CD8-positive, alpha-beta T cell (primary cell): ENCODE measurements at regions of chr1 and their contacts with region 1.

Region 1: GRCh38 chr1:29181413-29182225 is at the start of gene SRSF4:
- DNase-seq: peak; percentile 98 to 99 (median 99)
- ATAC-seq: peak; percentile 92
- H3K4me3 ChIP-seq: peak within 1 kb of the TSS; percentile 89 to 98
- H3K4me3 Mint-ChIP-seq: peak within 1 kb of the TSS; percentile 94
- H3K27ac ChIP-seq: peak within 1 kb of the TSS; percentile 94 to 100
- H3K27ac Mint-ChIP-seq: peak within 1 kb of the TSS; percentile 94
- H3K4me1 ChIP-seq: peaks cover 37% of the 10 kb centered on the region
- H3K4me1 Mint-ChIP-seq: peaks cover 48% of the 10 kb centered on the region
- H3K27me3 ChIP-seq: no peaks in the 10 kb centered on the region
- H3K27me3 Mint-ChIP-seq: no peaks in the 10 kb centered on the region
- CTCF ChIP-seq: peak; percentile 68
- total RNA-seq, gene SRSF4: 83.6 to 92.2 TPM

Region 2: GRCh38 chr1:28552758-28553663 is 628.6 kb before region 1 on chr1 and contains the start of gene TRNAU1AP:
- CTCF ChIA-PET with region 1: no interaction called
- POLR2A ChIA-PET with region 1: no interaction called
- intact Hi-C with region 1: loop called in 1 of 2 experiments (anchors 2 kb)
- DNase-seq: peak; percentile 95 to 98 (median 97)
- ATAC-seq: peak; percentile 96
- H3K4me3 ChIP-seq: peak within 1 kb of the TSS; percentile 91 to 98
- H3K4me3 Mint-ChIP-seq: peak within 1 kb of the TSS; percentile 99
- H3K27ac ChIP-seq: peak within 1 kb of the TSS; percentile 77 to 86
- H3K27ac Mint-ChIP-seq: peak within 1 kb of the TSS; percentile 99
- H3K4me1 ChIP-seq: peaks cover 15% of the 10 kb centered on the region
- H3K4me1 Mint-ChIP-seq: peaks cover 24% of the 10 kb centered on the region
- H3K27me3 ChIP-seq: no peaks in the 10 kb centered on the region
- H3K27me3 Mint-ChIP-seq: no peaks in the 10 kb centered on the region
- CTCF ChIP-seq: no peak
- total RNA-seq, gene TRNAU1AP: 20.5 to 25.7 TPM

Region 3: DNA sequence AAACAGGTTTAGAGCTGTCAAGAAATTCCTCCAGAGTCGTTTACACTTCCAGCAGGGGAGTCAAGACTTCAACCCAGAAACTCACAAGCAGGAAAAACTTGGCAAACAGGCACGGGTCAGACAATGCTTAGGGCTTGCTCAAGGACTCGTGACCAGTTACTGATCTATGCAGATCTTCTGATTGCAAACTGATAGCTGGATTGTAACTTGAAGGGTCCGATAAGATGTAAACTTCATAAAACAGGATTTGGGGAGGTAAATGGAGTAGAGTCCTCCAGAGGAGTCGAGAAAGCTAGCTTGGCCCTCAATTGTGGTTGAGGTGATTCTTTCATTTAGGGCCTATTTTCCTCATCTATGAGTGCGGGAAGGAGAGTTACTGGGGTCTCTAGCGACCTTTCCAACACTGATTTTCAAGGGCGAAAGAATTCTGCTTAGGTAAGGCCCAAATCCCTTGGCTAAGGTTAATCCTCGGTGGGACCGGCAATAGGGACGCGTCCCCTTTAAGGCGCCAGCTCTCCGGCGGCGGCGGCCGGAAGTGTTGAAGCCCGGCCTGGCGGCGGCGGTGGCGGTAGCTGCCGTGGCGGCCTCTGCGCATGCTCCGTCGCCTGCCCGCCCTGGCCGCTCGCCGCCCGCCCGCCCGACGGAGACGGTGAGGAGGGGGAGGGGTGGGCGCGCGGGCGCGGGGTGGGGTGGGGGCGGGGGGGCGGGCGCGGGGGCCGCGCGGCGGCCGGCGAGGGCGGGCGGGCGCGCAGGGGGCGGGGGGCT is 513.2 kb before region 1 on chr1 and contains the start of gene GMEB1:
- CTCF ChIA-PET with region 1: no interaction called
- POLR2A ChIA-PET with region 1: interaction called, 4 read pairs
- intact Hi-C with region 1: loop called in 1 of 2 experiments (anchors 2 kb)
- DNase-seq: peak; percentile 66 to 91 (median 82)
- ATAC-seq: peak; percentile 61
- H3K4me3 ChIP-seq: peak within 1 kb of the TSS; percentile 83 to 98
- H3K4me3 Mint-ChIP-seq: peak within 1 kb of the TSS; percentile 92
- H3K27ac ChIP-seq: peak within 1 kb of the TSS; percentile 81 to 98
- H3K27ac Mint-ChIP-seq: peak within 1 kb of the TSS; percentile 97
- H3K4me1 ChIP-seq: peaks cover 9% of the 10 kb centered on the region
- H3K4me1 Mint-ChIP-seq: peaks cover 22% of the 10 kb centered on the region
- H3K27me3 ChIP-seq: no peaks in the 10 kb centered on the region
- H3K27me3 Mint-ChIP-seq: no peaks in the 10 kb centered on the region
- CTCF ChIP-seq: no peak
- total RNA-seq, gene GMEB1: 12.9 to 13.6 TPM

Region 4: DNA sequence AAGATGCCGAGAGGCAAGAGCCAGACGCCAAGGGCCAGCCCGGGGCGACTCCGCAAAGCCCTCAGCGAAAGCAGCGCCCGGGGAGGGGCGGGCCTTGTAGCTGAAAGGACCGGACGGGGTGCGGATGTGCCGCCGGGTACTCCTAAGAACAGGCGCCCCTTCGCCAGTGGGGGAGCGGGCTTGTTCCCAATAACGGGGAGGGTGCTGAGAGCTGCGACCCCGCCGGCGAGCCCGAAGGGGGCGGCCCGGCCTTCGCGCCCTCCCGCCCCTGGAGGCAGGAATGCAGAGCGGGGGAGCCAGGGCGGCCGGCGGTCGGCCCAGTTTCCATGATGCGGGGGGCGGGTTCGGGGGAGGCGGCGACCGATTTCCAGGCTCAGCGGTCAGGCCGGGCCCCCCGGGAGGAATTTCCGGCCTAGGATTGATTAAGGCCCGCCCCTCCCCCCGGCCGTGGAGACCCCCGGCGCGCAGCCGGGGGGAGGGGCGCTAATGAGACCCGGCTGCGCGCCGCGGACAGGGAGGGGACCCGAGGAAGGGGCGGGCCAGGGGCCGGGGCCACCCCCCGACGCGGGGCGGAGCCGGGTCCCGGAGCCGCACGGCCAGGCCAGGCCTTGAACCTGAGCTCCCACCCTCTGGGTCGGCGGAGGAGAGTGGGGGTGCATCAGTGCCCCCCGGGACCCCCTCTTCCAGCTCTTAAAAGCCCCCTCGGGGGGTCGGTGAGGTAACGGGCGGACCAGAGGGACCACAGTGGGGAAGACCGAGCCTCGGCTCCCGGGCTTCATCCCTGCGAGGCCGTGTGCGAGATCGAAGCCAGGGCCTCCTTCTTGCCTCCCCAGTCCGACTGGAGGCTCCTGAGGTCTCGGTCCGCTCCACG is 57.0 kb before region 1 on chr1:
- CTCF ChIA-PET with region 1: no interaction called
- POLR2A ChIA-PET with region 1: interaction called, 4 read pairs
- intact Hi-C with region 1: loop called in 1 of 2 experiments (anchors 5 kb)
- DNase-seq: peak; percentile 8 to 71 (median 50)
- ATAC-seq: peak; percentile 45
- H3K4me3 ChIP-seq: peak overlapping the region; percentile 55 to 66
- H3K4me3 Mint-ChIP-seq: peak overlapping the region; percentile 80
- H3K27ac ChIP-seq: no peak overlapping the region
- H3K27ac Mint-ChIP-seq: no peak overlapping the region
- H3K4me1 ChIP-seq: peaks cover 28% of the 10 kb centered on the region
- H3K4me1 Mint-ChIP-seq: peaks cover 13% of the 10 kb centered on the region
- H3K27me3 ChIP-seq: peaks cover 23 to 24% of the 10 kb centered on the region in 2 experiments
- H3K27me3 Mint-ChIP-seq: peaks cover 12% of the 10 kb centered on the region
- CTCF ChIP-seq: no peak

Region 5: DNA sequence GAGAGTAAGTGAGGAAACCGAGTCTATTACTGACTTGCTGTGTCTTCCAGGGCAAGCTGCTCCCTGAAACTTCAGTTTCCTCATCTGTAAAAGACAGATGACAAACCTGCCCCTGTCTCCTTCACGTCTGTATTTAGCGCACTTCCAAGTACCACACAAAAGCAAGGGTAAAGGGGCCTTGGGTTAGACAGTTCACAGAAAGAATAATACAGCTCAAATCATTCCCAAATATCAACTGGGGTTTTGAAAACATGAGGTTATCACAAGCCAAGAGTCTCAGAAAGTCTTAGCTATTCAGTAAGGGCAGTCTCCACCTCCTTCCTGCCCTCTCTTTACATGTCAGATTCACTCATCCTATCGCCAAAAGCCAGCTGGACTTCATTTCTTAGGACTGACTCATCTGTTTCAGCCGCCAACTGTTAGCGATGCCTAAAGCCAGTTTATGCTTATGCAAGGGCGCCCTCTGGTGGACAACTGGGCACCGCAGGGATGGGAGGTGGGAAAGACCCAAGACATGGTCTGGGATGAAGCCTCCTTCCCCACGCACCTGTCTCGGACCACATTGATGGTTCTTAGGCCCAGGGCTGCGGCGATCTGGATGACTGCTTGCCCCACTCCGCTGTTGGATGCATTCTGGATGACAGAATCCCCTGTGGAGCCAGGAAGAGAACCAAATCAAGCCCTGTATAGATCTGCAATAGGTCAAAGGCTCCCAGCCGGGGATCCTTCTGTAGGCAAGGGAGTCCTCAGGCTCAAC is 21.1 kb after region 1 on chr1:
- CTCF ChIA-PET with region 1: interaction called, 33 read pairs
- POLR2A ChIA-PET with region 1: interaction called, 14 read pairs
- intact Hi-C with region 1: loop called in 1 of 2 experiments (anchors 1 kb)
- DNase-seq: peak; percentile 67 to 95 (median 87)
- ATAC-seq: peak; percentile 84
- H3K4me3 ChIP-seq: no peak overlapping the region
- H3K4me3 Mint-ChIP-seq: no peak overlapping the region
- H3K27ac ChIP-seq: no peak overlapping the region
- H3K27ac Mint-ChIP-seq: no peak overlapping the region
- H3K4me1 ChIP-seq: no peaks in the 10 kb centered on the region
- H3K4me1 Mint-ChIP-seq: no peaks in the 10 kb centered on the region
- H3K27me3 ChIP-seq: no peaks in the 10 kb centered on the region
- H3K27me3 Mint-ChIP-seq: no peaks in the 10 kb centered on the region
- CTCF ChIP-seq: peak; percentile 93